MCF 10A (cell line): ENCODE measurements at regions of chr18 and their contacts with region 1.

Region 1: GRCh38 chr18:5600378-5601071 is 56.7 kb upstream of the EPB41L3 start:
- DNase-seq: peak; percentile 14
- H3K4me3 Mint-ChIP-seq: no peak overlapping the region
- H3K27ac Mint-ChIP-seq: no peak overlapping the region
- H3K4me1 Mint-ChIP-seq: peaks cover 1% of the 10 kb centered on the region
- H3K27me3 Mint-ChIP-seq: peaks cover 36% of the 10 kb centered on the region
- CTCF ChIP-seq: peak; percentile 23

Region 2: GRCh38 chr18:5073026-5073944 is 527.2 kb before region 1 on chr18:
- CTCF ChIA-PET with region 1: interaction called, 5 read pairs
- POLR2A ChIA-PET with region 1: no interaction called
- intact Hi-C with region 1: loop called (anchors 5 kb)
- DNase-seq: no peak
- H3K4me3 Mint-ChIP-seq: no peak overlapping the region
- H3K27ac Mint-ChIP-seq: no peak overlapping the region
- H3K4me1 Mint-ChIP-seq: no peaks in the 10 kb centered on the region
- H3K27me3 Mint-ChIP-seq: no peaks in the 10 kb centered on the region
- CTCF ChIP-seq: peak; percentile 63

Region 3: DNA sequence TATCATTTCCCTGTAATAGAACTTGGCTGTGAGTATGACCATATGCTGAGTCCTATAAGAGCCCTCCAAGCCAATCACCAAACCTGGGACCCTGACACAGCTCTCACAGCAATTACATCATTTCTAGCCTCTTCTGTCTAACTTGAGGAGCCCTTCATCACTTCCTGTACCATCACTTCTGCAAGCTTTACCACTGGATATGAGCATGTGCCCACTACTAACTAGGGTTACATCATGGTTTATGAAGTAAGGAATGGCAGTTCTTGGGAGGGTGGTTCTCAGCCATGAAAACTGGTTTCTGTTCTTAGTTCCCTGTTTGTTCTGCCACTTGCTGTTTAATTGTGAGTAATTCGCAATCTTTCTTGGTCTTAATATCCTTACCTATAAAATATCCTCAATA is 25.7 kb before region 1 on chr18:
- CTCF ChIA-PET with region 1: no interaction called
- POLR2A ChIA-PET with region 1: no interaction called
- intact Hi-C with region 1: no loop called
- DNase-seq: no peak
- H3K4me3 Mint-ChIP-seq: no peak overlapping the region
- H3K27ac Mint-ChIP-seq: no peak overlapping the region
- H3K4me1 Mint-ChIP-seq: no peaks in the 10 kb centered on the region
- H3K27me3 Mint-ChIP-seq: no peaks in the 10 kb centered on the region
- CTCF ChIP-seq: no peak

Region 4: GRCh38 chr18:5738526-5738925 is 138.0 kb after region 1 on chr18:
- CTCF ChIA-PET with region 1: no interaction called
- POLR2A ChIA-PET with region 1: no interaction called
- intact Hi-C with region 1: no loop called
- DNase-seq: no peak
- H3K4me3 Mint-ChIP-seq: no peak overlapping the region
- H3K27ac Mint-ChIP-seq: no peak overlapping the region
- H3K4me1 Mint-ChIP-seq: no peaks in the 10 kb centered on the region
- H3K27me3 Mint-ChIP-seq: peaks cover 21% of the 10 kb centered on the region
- CTCF ChIP-seq: no peak

Region 5: DNA sequence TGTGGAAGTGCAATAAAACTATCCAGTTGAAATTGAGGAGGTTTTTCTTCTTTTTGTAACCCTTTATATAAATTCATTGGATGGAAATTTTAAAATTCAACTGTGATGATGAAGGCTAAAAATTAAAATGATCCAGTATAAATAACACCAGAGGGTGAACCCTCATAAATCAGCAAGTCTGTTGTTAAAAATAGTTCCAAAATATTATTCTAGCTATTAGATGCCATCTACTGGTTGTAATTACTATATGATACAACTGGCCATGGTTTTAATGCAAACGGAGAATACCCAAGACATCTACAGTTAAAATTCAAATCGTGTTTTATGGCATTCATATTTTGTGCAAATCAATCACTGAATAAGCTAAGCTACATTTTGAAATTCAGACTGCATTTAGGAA is 241.0 kb after region 1 on chr18:
- CTCF ChIA-PET with region 1: interaction called, 8 read pairs
- POLR2A ChIA-PET with region 1: no interaction called
- intact Hi-C with region 1: loop called (anchors 1 kb)
- DNase-seq: no peak
- H3K4me3 Mint-ChIP-seq: no peak overlapping the region
- H3K27ac Mint-ChIP-seq: no peak overlapping the region
- H3K4me1 Mint-ChIP-seq: no peaks in the 10 kb centered on the region
- H3K27me3 Mint-ChIP-seq: peaks cover 32% of the 10 kb centered on the region
- CTCF ChIP-seq: peak; percentile 7

Region 6: DNA sequence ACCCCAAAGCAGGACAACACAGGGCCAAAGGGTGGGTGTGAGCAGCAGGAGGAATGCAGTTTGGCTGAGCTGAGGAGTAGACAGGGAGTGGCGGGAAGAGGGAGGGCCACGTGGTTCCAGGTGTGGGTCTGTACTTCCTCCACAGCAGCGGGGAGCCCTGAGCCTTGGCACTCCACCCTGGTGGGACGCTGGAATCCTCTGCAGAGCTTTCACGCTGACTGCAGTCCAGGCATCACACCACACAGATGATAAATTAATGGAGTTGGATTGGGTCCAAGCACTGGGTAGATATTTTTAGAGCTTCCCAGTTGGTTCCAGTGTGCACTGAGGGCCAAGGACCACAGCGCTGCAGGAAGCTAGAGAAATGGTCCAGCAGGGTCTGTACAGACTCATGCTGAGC is 361.8 kb after region 1 on chr18:
- CTCF ChIA-PET with region 1: no interaction called
- POLR2A ChIA-PET with region 1: no interaction called
- intact Hi-C with region 1: no loop called
- DNase-seq: no peak
- H3K4me3 Mint-ChIP-seq: no peak overlapping the region
- H3K27ac Mint-ChIP-seq: no peak overlapping the region
- H3K4me1 Mint-ChIP-seq: peaks cover 8% of the 10 kb centered on the region
- H3K27me3 Mint-ChIP-seq: no peaks in the 10 kb centered on the region
- CTCF ChIP-seq: no peak

Region 7: GRCh38 chr18:6521795-6522418 is 921.4 kb after region 1 on chr18:
- CTCF ChIA-PET with region 1: interaction called, 6 read pairs
- POLR2A ChIA-PET with region 1: no interaction called
- intact Hi-C with region 1: loop called (anchors 5 kb)
- DNase-seq: peak; percentile 39
- H3K4me3 Mint-ChIP-seq: no peak overlapping the region
- H3K27ac Mint-ChIP-seq: no peak overlapping the region
- H3K4me1 Mint-ChIP-seq: no peaks in the 10 kb centered on the region
- H3K27me3 Mint-ChIP-seq: peaks cover 23% of the 10 kb centered on the region
- CTCF ChIP-seq: peak; percentile 89